ENCODE measurements at regions of chr9 and their contacts with region 1.

Region 1: DNA sequence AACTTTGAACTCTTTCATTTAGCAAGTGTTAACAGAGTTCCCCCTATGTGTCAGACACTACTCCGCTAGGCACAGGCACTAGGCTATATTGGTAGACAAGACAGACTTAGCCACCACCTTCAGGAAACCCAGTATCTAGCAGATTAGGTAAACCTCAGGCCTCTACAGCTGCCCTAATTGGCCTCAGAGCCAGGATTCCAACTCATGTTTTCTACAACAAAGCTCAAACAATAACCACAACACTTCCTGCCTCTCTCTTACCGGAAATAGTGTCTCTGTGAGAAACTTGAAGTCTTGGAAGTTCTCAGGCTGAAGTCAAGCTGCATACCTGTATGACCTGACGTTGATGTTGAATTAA is 116.6 kb upstream of the SLC44A1 start:
- ATAC-seq: peak in 1 of 8 experiments; percentile 79
- H3K4me3 ChIP-seq: no peak overlapping the region
- H3K27ac ChIP-seq: no peak overlapping the region
- H3K4me1 ChIP-seq: no peaks in the 10 kb centered on the region

Region 2: DNA sequence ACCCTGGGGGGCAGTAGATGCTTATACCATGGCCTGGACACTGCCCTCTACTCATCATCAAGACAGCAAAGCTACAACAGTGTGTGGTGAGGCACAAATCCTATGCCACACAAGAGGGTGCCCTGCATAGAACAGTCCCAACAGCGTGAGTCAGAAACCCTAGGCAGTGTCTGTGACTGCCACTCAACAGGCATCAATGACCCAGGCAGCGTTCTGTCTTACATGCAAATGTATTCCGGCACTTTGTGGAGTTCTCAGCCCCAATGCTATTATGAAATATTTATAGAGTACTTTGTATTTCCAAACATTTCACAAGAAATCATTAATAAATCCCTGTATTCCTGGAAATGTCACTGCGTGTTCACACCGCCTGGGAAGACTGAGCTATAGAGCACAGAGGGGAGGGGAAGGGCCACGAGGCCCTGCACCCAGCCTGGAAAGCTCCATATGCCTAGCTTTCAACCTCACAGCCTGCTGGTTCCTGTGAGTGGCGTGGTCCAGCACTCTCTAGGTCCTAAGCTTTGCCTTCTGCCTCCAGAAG is 286.2 kb before region 1 on chr9:
- in situ Hi-C with region 1: no loop called
- ATAC-seq: peak; percentile 29 to 83 (median 44)
- H3K4me3 ChIP-seq: no peak overlapping the region
- H3K27ac ChIP-seq: no peak overlapping the region
- H3K4me1 ChIP-seq: no peaks in the 10 kb centered on the region

Region 3: DNA sequence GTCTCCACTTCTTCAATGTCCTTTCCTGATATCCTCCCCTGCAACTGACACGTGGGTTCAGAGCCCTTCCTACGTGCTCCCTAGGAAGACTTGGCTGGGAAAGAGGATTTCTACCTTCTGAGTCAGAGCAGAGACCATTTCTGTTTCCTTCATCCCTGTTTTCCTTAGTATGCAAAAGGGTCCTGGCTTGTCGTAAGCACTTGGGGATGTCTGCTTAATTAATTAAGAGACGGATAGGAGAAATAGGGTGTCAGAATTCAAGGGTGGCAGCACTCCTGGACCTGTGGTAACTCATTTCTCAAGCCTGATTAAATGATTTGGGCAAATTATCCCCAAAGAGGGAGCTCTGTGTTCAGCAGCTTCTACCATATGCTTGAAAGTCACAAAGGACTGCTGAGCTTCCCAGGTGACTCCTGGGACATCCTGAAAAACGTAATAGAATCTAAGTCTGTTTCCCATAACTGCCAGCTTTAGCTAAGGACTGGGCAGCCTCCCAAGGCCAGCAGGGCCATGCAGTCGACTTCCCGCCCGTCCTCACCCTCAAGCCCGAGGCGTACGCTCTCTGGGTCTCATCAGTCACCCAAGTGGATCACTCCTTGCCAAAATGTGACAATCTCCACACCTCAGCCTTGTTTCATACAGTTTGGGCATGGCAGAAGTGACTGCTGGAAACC is 220.4 kb before region 1 on chr9:
- in situ Hi-C with region 1: loop called in 1 of 9 experiments (anchors 25 kb)
- ATAC-seq: peak in 2 of 8 experiments; percentile 13 to 24
- H3K4me3 ChIP-seq: no peak overlapping the region
- H3K27ac ChIP-seq: no peak overlapping the region
- H3K4me1 ChIP-seq: peaks cover 13 to 29% of the 10 kb centered on the region in 2 donors